B cell (primary cell): ENCODE measurements at regions of chr2 and their contacts with region 1.

Region 1: GRCh38 chr2:44955593-44956392 is 14.3 kb downstream of the SIX3 start:
- DNase-seq: peak; percentile 85
- ATAC-seq: peak; percentile 80
- H3K4me3 ChIP-seq: peak overlapping the region in 4 of 5 experiments; percentile 9 to 56 (median 35)
- H3K4me3 Mint-ChIP-seq: peak overlapping the region; percentile 82
- H3K27ac ChIP-seq: no peak overlapping the region
- H3K27ac Mint-ChIP-seq: no peak overlapping the region
- H3K4me1 ChIP-seq: peaks cover 35 to 40% of the 10 kb centered on the region in 2 donors
- H3K4me1 Mint-ChIP-seq: peaks cover 36% of the 10 kb centered on the region
- H3K27me3 ChIP-seq: peaks cover 0 to 57% (median 28%) of the 10 kb centered on the region in 4 experiments
- H3K27me3 Mint-ChIP-seq: peaks cover 74% of the 10 kb centered on the region
- CTCF ChIP-seq: peak; percentile 97

Region 2: DNA sequence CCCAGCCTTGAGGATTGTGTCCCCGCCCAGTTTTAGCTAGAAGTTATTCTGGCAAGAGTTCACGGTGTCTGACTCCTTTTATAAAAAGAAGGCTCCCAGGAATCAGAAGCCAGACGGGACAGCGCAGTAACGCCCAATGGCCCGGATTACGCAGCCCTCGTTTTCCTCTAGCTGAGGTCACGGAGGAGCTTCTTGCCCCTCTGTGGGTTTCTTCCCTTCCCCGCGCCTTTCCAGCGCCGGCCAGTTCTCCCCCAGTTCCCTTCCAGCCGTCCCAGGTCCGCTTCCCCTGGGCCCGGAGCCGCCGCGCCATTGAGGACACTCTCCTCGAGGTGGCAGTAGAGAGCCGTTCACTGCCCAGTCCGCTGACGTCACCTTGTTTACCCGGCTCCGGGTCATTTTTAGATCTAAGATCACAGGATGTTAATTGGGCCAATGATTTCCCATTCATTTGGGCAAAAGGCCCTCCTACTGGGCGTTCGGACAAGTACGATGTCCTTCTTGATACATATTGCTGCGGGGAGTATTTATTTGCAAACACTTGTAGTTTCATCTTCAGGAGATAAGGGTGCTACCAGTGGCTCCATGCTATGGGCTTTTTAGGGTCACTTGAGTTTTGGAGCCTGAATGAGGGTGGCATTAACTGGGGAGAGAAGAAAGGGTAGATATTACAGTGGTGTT is 868.6 kb before region 1 on chr2:
- CTCF ChIA-PET with region 1: interaction called, 20 read pairs
- POLR2A ChIA-PET with region 1: no interaction called
- intact Hi-C with region 1: loop called (anchors 1 kb)
- DNase-seq: peak; percentile 87
- ATAC-seq: peak; percentile 97
- H3K4me3 ChIP-seq: peak overlapping the region; percentile 43 to 70 (median 57)
- H3K4me3 Mint-ChIP-seq: peak overlapping the region; percentile 66
- H3K27ac ChIP-seq: peak overlapping the region; percentile 44 to 71
- H3K27ac Mint-ChIP-seq: peak overlapping the region; percentile 54
- H3K4me1 ChIP-seq: peaks cover 24 to 32% of the 10 kb centered on the region in 2 donors
- H3K4me1 Mint-ChIP-seq: peaks cover 23% of the 10 kb centered on the region
- H3K27me3 ChIP-seq: no peaks in the 10 kb centered on the region
- H3K27me3 Mint-ChIP-seq: no peaks in the 10 kb centered on the region
- CTCF ChIP-seq: peak; percentile 97

Region 3: DNA sequence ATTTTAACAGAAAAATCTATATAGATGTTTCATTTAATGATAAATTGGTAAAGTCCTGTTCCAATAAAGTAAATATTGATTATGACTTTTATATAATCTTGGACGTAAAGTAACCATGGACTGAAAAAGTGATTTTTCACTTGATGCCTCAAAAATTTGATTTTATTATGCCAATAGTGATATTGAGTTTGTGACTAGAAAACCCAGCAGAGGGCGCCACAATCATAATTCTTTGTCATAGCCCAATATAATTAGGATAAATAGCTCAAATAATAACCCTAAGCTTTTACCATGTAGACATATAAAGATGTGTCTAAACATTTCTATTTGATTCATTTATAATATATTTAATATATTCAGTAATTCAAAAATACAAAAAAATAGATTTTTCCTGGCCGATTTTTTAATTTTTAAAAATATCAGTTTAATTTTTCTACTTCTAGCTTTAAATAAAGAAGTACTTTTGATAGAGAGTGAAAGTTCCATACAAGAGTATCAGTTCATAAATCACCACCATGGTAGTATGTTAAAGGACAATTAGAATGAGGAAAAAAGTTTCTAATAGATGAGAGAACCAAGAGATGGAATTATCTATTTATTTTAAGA is 563.4 kb before region 1 on chr2:
- CTCF ChIA-PET with region 1: interaction called, 216 read pairs
- POLR2A ChIA-PET with region 1: no interaction called
- intact Hi-C with region 1: no loop called
- DNase-seq: peak; percentile 59
- ATAC-seq: no peak
- H3K4me3 ChIP-seq: no peak overlapping the region
- H3K4me3 Mint-ChIP-seq: no peak overlapping the region
- H3K27ac ChIP-seq: no peak overlapping the region
- H3K27ac Mint-ChIP-seq: no peak overlapping the region
- H3K4me1 ChIP-seq: no peaks in the 10 kb centered on the region
- H3K4me1 Mint-ChIP-seq: peaks cover 3% of the 10 kb centered on the region
- H3K27me3 ChIP-seq: no peaks in the 10 kb centered on the region
- H3K27me3 Mint-ChIP-seq: no peaks in the 10 kb centered on the region
- CTCF ChIP-seq: peak; percentile 84

Region 4: GRCh38 chr2:44487052-44487451 is 468.7 kb before region 1 on chr2:
- CTCF ChIA-PET with region 1: interaction called, 203 read pairs
- POLR2A ChIA-PET with region 1: no interaction called
- intact Hi-C with region 1: no loop called
- DNase-seq: no peak
- ATAC-seq: no peak
- H3K4me3 ChIP-seq: no peak overlapping the region
- H3K4me3 Mint-ChIP-seq: no peak overlapping the region
- H3K27ac ChIP-seq: no peak overlapping the region
- H3K27ac Mint-ChIP-seq: no peak overlapping the region
- H3K4me1 ChIP-seq: no peaks in the 10 kb centered on the region
- H3K4me1 Mint-ChIP-seq: no peaks in the 10 kb centered on the region
- H3K27me3 ChIP-seq: no peaks in the 10 kb centered on the region
- H3K27me3 Mint-ChIP-seq: no peaks in the 10 kb centered on the region
- CTCF ChIP-seq: no peak

Region 5: GRCh38 chr2:44941551-44942234 is 14.1 kb before region 1 on chr2 and contains the start of gene SIX3:
- CTCF ChIA-PET with region 1: interaction called, 10 read pairs
- POLR2A ChIA-PET with region 1: no interaction called
- intact Hi-C with region 1: no loop called
- DNase-seq: peak; percentile 81
- ATAC-seq: peak; percentile 54
- H3K4me3 ChIP-seq: peak within 1 kb of the TSS in 4 of 5 experiments; percentile 43 to 76 (median 59)
- H3K4me3 Mint-ChIP-seq: peak within 1 kb of the TSS; percentile 84
- H3K27ac ChIP-seq: no peak within 1 kb of the TSS
- H3K27ac Mint-ChIP-seq: peak within 1 kb of the TSS; percentile 53
- H3K4me1 ChIP-seq: peaks cover 75 to 84% of the 10 kb centered on the region in 2 donors
- H3K4me1 Mint-ChIP-seq: peaks cover 61% of the 10 kb centered on the region
- H3K27me3 ChIP-seq: peaks cover 0 to 94% (median 70%) of the 10 kb centered on the region in 4 experiments
- H3K27me3 Mint-ChIP-seq: peaks cover 68% of the 10 kb centered on the region
- CTCF ChIP-seq: no peak
- total RNA-seq, gene SIX3: not detected in 2 replicates

Region 6: GRCh38 chr2:45739796-45740485 is 784.1 kb after region 1 on chr2:
- CTCF ChIA-PET with region 1: no interaction called
- POLR2A ChIA-PET with region 1: no interaction called
- intact Hi-C with region 1: no loop called
- DNase-seq: no peak
- ATAC-seq: no peak
- H3K4me3 ChIP-seq: no peak overlapping the region
- H3K4me3 Mint-ChIP-seq: no peak overlapping the region
- H3K27ac ChIP-seq: no peak overlapping the region
- H3K27ac Mint-ChIP-seq: no peak overlapping the region
- H3K4me1 ChIP-seq: peaks cover 34 to 41% of the 10 kb centered on the region in 2 donors
- H3K4me1 Mint-ChIP-seq: peaks cover 77% of the 10 kb centered on the region
- H3K27me3 ChIP-seq: no peaks in the 10 kb centered on the region
- H3K27me3 Mint-ChIP-seq: no peaks in the 10 kb centered on the region
- CTCF ChIP-seq: no peak